Posterior cingulate gyrus (tissue), 11 donors: ENCODE measurements at regions of chr6 and their contacts with region 1.

Region 1: GRCh38 chr6:157169656-157170055 is 153.7 kb downstream of the TMEM242 start:
- DNase-seq: peak in 5 of 10 donors; percentile 45 to 90 (median 53)

Region 2: DNA sequence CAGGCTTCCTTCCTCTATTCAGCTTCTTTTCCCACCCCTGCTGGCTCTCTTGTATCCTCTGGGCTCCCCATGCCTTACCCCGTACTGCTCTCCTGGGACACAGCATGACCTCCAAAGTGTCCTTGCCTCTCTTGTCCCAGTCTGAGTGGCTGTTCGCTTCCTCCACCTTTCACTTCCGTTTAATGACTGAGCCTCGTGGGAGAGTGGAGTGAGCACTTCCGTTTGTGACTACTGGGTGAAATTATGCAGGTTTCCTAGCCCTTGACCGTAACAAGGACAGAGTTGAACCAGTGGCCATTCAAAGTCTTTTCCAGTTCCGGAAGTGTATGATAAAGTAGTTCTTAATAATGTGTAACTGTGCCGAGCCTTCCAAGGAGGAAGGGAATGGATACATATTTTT is 283.2 kb before region 1 on chr6:
- intact Hi-C with region 1: loop called (anchors 10 kb)
- DNase-seq: no peak

Region 3: DNA sequence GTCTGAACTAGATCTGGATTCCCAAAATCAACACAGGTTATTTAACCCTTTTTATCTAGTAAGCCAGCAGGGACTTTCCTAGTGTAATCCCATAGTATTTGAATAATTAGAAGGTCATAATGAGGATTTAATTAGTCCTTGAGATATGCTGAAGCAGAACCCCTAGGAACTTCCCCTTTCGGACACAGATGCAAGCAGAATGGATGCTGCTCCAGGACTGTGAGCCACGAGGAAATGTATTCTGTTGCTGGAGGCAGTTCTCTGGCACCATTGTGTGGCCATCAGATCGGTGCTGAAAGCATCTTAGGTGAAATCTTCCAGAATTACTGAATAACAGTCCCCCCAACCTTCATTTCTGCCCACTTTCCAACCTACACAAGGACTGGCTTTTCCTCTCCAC is 53.2 kb before region 1 on chr6:
- intact Hi-C with region 1: no loop called
- DNase-seq: no peak